ENCODE measurements at regions of chr9 and their contacts with region 1.

Region 1: GRCh38 chr9:2469681-2470221 is 151.8 kb upstream of the VLDLR start:
- DNase-seq: no peak
- H3K4me3 ChIP-seq: no peak overlapping the region
- H3K27ac ChIP-seq: no peak overlapping the region
- H3K27me3 ChIP-seq: no peaks in the 10 kb centered on the region
- CTCF ChIP-seq: peak in 1 of 56 donors; percentile 8

Region 2: DNA sequence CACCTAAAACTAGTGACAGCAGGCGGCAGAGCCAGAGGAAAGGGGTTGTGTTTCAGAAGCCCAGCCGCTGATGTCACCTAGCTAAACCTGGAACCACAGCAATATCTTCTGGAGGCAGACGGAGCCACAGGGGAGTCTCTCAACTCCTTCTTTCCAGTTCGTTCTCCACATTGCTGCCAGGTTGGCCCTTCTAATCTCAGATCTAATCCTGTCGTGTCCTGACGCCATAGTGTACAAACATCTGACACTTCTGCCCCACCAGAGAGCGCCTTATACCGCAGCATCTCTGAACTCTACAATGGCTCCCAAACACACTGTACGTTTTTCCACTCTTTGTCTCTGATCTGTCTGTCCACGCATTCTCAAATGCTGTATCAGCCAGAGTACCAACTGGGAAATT is 214.6 kb before region 1 on chr9:
- intact Hi-C with region 1: no loop called
- DNase-seq: no peak
- H3K4me3 ChIP-seq: no peak overlapping the region
- H3K27ac ChIP-seq: no peak overlapping the region
- H3K27me3 ChIP-seq: no peaks in the 10 kb centered on the region
- CTCF ChIP-seq: no peak

Region 3: DNA sequence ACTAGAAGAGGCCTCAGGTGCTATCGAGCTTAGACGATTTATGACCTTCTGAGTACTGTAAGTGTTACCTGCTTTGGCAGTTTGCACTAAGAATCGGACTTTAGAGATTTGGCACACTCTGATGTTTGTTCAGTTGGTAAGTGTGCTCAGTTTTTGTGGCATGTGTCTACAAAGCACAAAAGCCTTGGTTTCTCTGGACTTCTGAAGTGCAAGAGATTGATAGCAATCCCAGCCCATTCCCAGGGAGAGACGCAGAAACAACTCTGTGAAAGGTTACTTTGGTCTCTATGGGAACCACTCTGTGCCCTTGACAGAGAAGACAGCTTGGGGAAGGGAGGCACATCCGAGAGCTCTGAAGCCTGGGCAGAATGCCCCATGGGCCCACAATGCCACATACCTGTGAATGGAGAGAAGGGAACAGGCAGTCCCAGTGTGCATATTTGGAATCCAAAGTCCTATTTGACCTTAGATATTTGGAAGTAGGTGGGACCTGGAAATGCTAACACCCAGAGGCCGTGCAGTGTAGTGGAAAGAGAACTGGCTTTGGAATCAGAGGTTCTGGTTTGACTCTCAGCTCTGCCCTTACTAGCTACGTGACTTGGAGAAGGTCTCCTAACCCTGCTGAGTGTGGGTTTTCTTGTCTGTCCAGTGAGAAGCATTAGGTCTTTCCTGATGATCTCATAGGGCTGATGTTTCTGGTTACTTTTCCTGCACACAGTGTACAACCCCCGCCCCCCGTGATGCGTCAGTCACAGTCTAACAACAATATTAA is 42.4 kb before region 1 on chr9:
- intact Hi-C with region 1: loop called in 1 of 2 experiments (anchors 2 kb)
- DNase-seq: no peak
- H3K4me3 ChIP-seq: no peak overlapping the region
- H3K27ac ChIP-seq: no peak overlapping the region
- H3K27me3 ChIP-seq: no peaks in the 10 kb centered on the region
- CTCF ChIP-seq: no peak